ENCODE measurements at regions of chr6 and their contacts with region 1.

Region 1: DNA sequence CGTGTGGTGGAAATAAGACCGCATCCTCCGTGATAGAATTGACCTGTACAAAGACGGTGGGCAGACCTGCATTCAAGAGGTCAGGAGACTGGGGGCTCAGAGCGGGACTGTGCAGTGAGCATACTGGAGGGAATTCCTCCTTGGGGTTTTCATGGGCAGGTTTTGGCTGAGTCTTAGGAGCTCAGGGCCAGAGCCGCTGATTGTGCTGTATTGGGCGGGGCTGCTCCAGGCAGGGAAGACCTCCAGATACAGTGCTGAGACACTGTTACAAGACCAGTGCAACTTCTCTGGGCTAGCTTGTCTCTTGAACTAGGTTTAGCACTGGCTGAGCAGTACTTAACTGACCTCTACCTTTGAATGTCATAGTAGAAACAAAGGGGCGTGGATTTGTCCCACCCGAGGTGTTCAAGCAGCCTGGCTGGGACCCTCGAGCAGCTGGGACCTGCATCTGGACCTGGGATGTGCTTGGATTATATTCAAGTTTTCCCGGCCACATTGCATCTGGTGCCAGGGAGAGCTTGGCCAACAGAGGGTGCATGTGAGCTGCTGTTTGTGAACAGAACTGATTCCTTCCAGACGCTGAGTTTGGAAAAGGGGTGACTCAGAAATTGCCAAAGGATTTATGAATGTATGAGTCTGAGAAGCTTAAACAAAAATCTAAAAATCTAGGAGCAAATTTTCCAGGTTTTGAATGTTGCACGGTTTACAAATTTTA is 33.4 kb upstream of the SLC22A1 start:
- DNase-seq: peak; percentile 76
- H3K4me3 Mint-ChIP-seq: no peak overlapping the region
- H3K27ac Mint-ChIP-seq: no peak overlapping the region
- H3K4me1 Mint-ChIP-seq: no peaks in the 10 kb centered on the region
- H3K27me3 Mint-ChIP-seq: no peaks in the 10 kb centered on the region
- CTCF ChIP-seq: peak; percentile 68

Region 2: DNA sequence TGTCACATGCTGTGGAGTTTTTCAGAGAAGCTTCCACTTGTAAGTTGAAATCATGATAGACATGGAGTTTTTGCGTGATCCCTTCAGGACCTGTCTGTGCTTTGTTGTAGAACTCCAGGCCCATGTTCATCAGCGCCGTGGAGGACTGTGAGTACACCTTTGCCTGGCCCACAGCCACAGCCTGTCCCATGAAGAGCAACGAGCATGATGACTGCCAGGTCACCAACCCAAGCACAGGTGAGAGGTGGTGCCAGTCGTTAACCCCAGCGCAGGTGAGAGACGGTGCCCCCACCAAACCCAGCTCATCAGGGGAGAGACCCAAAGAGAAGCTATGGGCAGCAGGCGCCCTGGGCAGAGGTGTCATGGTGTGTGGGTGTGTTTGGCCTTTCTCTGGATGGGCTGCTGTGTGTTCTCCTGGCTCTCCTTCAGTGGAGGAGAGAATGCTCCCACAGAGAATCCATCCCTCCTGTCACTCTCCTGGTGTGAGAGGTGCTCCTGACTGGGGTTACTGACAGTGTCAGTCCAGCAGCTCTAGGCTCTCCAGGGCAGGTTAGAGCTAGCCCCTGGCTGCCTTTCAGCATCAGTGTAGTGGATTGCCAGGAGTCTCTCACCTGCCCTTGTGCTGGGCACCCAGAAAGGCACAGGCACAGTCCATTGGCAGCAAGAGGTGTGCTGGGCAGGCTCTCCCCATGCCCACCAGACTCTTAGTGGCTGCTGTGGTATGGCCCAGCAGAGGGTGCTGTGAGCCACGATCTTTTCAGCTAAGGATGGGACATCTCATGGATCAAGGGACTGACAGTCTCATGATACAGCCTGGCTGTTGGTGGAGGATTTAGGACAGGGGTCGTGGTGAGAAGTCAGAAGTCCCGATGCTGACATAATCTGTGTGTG is 16.2 kb before region 1 on chr6:
- CTCF ChIA-PET with region 1: interaction called, 24 read pairs
- POLR2A ChIA-PET with region 1: no interaction called
- intact Hi-C with region 1: no loop called
- DNase-seq: no peak
- H3K4me3 Mint-ChIP-seq: no peak overlapping the region
- H3K27ac Mint-ChIP-seq: peak overlapping the region; percentile 19
- H3K4me1 Mint-ChIP-seq: no peaks in the 10 kb centered on the region
- H3K27me3 Mint-ChIP-seq: no peaks in the 10 kb centered on the region
- CTCF ChIP-seq: peak; percentile 12

Region 3: DNA sequence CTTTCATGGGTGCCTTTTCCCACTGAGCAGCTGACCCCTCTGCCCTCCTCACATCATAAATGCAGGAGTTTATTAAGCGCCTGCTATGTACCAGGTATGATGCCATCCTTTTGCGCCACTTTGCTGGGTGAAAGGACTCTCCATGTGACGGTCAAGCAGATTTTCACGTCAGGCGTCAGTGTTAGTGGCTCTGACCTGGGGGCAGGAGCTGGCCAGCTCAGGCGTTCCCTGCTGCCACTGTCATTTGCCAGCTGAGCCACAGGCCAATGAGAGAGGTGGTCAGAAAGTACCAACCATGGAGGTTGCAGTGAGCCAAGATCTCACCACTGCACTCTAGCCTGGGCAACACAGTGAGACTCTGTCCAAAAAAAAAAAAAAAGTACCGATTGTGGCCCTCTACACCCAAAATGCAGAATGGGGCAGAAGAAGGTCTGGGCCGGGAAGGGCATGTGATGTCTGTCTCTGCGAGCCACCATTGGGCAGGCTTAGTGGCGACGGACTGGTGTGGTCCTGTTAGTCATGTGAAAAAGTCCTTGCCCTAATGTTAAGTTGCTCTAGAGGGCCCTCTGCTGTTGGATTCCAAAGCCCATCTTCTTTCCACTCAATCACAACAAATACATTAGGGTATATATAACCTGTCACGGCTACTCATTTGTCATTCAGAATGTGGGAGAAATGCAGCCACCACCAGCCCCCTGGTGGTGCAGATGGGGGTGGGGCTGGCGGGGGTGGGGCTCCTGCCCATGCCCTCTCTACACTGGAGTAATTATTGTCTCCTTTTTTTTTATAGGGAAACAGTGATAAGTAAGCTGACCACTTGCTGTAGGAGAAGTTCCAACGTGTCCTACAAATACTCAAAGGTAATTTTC is 15.0 kb after region 1 on chr6:
- CTCF ChIA-PET with region 1: interaction called, 52 read pairs
- POLR2A ChIA-PET with region 1: interaction called, 3 read pairs
- intact Hi-C with region 1: no loop called
- DNase-seq: peak; percentile 48
- H3K4me3 Mint-ChIP-seq: no peak overlapping the region
- H3K27ac Mint-ChIP-seq: no peak overlapping the region
- H3K4me1 Mint-ChIP-seq: no peaks in the 10 kb centered on the region
- H3K27me3 Mint-ChIP-seq: no peaks in the 10 kb centered on the region
- CTCF ChIP-seq: peak; percentile 28

Region 4: GRCh38 chr6:160137989-160138835 is 50.0 kb after region 1 on chr6:
- CTCF ChIA-PET with region 1: interaction called, 13 read pairs
- POLR2A ChIA-PET with region 1: no interaction called
- intact Hi-C with region 1: no loop called
- DNase-seq: peak; percentile 73
- H3K4me3 Mint-ChIP-seq: no peak overlapping the region
- H3K27ac Mint-ChIP-seq: no peak overlapping the region
- H3K4me1 Mint-ChIP-seq: peaks cover 25% of the 10 kb centered on the region
- H3K27me3 Mint-ChIP-seq: no peaks in the 10 kb centered on the region
- CTCF ChIP-seq: peak; percentile 80

Region 5: DNA sequence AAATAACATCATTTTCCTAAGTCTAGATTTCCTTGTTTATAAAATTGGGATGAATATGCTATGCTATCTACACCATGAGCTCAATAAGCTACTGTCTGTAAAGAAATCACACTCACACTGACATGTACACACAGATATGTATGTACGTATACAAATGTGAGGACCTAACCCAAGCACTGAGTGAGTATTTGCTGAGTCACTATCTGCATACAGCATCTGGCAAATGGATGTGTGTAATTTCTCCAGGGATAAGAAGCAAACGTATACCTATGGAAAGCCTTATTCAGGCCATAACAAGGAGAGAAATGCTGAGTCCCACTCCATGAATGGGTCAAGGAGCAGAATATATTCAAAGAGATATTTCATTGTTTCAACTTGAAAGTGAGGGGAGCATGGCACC is 422.0 kb after region 1 on chr6:
- CTCF ChIA-PET with region 1: no interaction called
- POLR2A ChIA-PET with region 1: no interaction called
- intact Hi-C with region 1: no loop called
- DNase-seq: peak; percentile 38
- H3K4me3 Mint-ChIP-seq: no peak overlapping the region
- H3K27ac Mint-ChIP-seq: no peak overlapping the region
- H3K4me1 Mint-ChIP-seq: no peaks in the 10 kb centered on the region
- H3K27me3 Mint-ChIP-seq: no peaks in the 10 kb centered on the region
- CTCF ChIP-seq: no peak